Common myeloid progenitor, CD34-positive (primary cell): ENCODE measurements at regions of chr20 and their contacts with region 1.

Region 1: DNA sequence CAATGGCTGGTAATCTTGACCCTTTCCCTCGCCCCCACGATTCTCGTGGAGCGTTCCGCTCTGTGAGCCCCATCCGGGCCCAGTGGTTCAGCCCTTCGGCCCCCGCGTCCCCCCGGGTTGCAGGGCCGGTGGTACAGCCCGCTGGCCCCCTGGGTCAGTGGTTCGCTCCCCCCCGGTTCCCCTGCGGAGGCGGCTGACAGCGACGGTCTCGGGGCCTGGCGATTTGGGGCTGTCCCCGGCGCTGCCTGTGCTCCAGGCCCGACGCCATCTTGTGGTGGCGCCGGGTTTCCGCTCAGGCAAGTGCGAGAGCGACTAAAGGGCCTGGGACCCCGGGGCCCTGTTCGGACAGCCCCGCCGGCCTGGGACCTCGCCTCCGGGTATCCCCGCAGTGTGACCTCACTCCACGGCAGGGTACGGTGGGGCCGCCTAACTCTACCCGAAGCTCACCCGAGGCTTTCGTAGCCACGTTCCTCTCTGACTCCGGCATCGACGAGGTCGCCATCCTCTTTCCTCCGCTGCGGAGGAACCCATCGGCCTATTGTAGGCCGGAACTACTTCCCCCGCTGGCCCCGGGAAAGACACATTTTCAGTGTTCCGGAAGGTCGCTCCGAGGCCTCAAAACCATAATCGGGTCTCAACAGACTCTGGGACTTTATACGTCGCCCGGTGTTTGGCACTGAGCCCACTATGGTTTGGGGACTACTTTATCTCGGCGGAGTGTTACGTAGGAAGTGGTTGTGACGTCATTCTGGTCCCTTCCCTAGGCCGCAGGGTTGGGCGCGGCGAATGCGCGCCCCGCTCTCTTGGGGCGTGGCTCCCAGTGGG is at the start of gene ZNF335:
- DNase-seq: peak; percentile 97 to 98 (median 98)
- H3K4me3 ChIP-seq: peak within 1 kb of the TSS; percentile 60 to 97 (median 85)
- H3K27ac ChIP-seq: peak within 1 kb of the TSS; percentile 100
- H3K4me1 ChIP-seq: peaks cover 3 to 35% (median 26%) of the 10 kb centered on the region in 4 experiments
- H3K27me3 ChIP-seq: peaks cover 0 to 3% (median 0%) of the 10 kb centered on the region in 5 experiments

Region 2: GRCh38 chr20:45798935-45799642 is 172.8 kb before region 1 on chr20:
- CTCF ChIA-PET with region 1: interaction called, 30 read pairs
- POLR2A ChIA-PET with region 1: no interaction called
- DNase-seq: peak; percentile 63 to 77 (median 72)
- H3K4me3 ChIP-seq: no peak overlapping the region
- H3K27ac ChIP-seq: no peak overlapping the region
- H3K4me1 ChIP-seq: peaks cover 0 to 7% (median 0%) of the 10 kb centered on the region in 4 experiments
- H3K27me3 ChIP-seq: no peaks in the 10 kb centered on the region

Region 3: GRCh38 chr20:45934586-45935415 is 37.1 kb before region 1 on chr20 and contains the start of gene PCIF1:
- CTCF ChIA-PET with region 1: interaction called, 17 read pairs
- POLR2A ChIA-PET with region 1: interaction called, 8 read pairs
- DNase-seq: peak; percentile 97 to 99 (median 98)
- H3K4me3 ChIP-seq: peak within 1 kb of the TSS; percentile 73 to 99 (median 96)
- H3K27ac ChIP-seq: peak within 1 kb of the TSS; percentile 96 to 98
- H3K4me1 ChIP-seq: peaks cover 6 to 39% (median 25%) of the 10 kb centered on the region in 4 experiments
- H3K27me3 ChIP-seq: no peaks in the 10 kb centered on the region

Region 4: DNA sequence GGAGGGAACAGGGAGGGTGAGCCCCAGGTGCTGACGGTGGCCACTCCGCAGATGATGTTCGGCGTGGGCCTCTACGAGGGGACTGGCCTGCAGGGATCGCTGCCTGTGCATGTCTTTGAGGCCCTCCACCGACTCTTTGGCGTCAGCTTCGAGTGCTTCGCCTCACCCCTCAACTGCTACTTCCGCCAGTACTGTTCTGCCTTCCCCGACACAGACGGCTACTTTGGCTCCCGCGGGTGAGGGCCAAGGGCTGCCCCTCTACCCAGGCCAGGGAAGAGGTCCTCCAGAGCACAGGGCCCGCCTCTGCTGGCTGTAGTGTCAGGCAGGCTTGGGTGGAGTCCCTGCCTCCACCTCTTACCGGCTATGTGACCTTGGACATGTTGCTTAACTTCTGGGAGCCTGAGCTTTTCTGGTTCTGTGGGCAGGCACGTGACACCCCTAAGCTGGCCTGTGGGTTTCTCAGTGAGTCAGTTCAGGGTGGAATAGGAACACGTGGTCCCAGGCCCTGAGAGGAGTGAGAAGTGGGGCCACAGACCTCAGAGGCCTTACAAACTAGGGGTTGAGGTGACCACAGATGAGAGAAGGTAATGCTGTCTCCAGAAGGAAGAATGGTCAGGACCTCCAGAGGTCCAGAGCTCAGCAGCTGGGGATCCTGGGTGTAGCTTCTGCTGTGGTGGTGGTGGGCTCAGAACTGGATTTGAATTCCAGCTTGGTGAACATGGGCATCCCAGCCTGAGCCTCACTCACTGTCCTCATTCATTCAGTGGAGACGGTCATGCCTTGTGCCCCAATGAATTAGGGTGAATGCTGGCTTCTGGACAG is 25.5 kb before region 1 on chr20:
- CTCF ChIA-PET with region 1: interaction called, 19 read pairs
- POLR2A ChIA-PET with region 1: no interaction called
- DNase-seq: peak in 2 of 3 donors; percentile 40 to 46
- H3K4me3 ChIP-seq: no peak overlapping the region
- H3K27ac ChIP-seq: peak overlapping the region in 1 of 2 experiments; percentile 7
- H3K4me1 ChIP-seq: no peaks in the 10 kb centered on the region
- H3K27me3 ChIP-seq: no peaks in the 10 kb centered on the region

Region 5: DNA sequence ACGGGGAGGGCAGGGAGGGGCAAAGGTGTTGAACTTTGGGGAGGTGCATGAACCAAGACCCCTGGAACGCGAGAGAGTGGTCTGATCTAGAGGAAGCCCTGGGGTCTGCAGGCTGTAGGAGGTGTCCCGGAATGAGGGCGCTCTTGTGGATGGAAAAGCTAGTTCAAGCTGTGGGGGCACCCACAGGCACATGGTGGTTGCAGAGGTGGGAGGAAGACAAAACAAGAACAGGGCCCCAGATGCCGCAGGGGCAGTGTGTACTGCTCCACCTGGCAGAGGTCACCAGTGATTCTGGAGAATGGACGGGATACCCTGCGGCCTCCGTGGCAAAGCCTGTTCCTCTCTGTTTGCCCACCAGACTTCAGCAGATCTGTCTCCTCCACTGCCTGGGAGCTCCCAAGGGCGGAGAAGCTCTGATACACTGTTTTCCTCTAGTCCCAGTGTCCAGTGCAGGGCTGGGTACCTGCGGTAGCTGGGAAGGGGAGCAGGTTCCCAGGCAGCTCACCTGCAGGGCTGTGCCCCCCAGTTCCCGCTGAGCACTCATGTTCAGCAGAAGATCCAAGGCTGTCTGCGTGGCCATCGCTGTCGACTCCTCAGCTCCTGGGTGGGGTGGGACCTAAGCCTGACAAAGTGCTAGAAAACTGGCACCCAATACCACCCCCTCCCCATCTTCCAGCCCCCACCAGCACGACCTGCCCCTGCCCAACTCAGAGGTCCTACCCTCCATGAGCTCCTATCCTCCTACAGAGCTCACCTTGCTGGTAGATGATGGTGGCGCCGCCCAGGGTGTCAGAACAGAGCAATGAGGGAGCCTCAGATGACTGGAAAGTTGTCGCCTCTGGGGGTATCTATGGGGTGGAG is 14.6 kb before region 1 on chr20:
- CTCF ChIA-PET with region 1: interaction called, 43 read pairs
- POLR2A ChIA-PET with region 1: interaction called, 3 read pairs
- DNase-seq: no peak
- H3K4me3 ChIP-seq: no peak overlapping the region
- H3K27ac ChIP-seq: no peak overlapping the region
- H3K4me1 ChIP-seq: no peaks in the 10 kb centered on the region
- H3K27me3 ChIP-seq: no peaks in the 10 kb centered on the region

Region 6: DNA sequence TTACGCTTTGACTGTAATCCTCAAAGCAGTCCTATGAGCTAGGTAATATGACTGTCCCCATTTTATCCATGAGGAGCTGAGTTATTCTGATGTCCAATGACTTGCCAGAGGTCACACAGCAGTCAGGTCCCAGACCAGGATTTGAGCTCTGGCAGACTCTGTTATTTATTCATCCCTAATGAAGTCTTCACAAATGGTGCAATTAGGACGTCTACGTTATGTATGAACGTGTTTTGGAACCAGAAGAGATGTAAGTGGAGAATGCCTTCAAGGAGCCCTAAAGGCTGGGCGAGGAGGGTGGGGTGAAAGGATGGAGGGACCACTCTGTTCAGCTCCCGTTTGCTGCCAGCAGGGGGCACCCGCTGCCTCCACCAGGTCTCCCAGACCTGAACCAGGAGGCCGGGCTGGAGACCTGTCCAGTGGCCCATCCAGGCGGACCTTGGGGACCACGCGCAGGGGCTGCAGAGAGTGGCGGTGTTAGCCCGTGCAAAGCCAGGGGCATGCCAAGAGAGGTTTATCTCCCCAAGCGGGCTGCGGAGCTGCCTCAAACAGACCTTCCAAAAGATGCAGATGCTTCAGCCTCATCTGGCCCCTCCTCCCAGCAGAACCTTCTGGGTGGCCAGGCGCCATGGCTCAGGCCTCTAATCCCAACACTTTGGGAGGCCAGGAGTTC is 15.4 kb after region 1 on chr20:
- CTCF ChIA-PET with region 1: interaction called, 38 read pairs
- POLR2A ChIA-PET with region 1: no interaction called
- DNase-seq: peak; percentile 71 to 80 (median 77)
- H3K4me3 ChIP-seq: no peak overlapping the region
- H3K27ac ChIP-seq: no peak overlapping the region
- H3K4me1 ChIP-seq: peaks cover 0 to 4% (median 0%) of the 10 kb centered on the region in 4 experiments
- H3K27me3 ChIP-seq: peaks cover 0 to 13% (median 6%) of the 10 kb centered on the region in 5 experiments

Region 7: GRCh38 chr20:46013826-46014516 is 42.1 kb after region 1 on chr20:
- CTCF ChIA-PET with region 1: interaction called, 656 read pairs
- POLR2A ChIA-PET with region 1: no interaction called
- DNase-seq: peak; percentile 76 to 85 (median 80)
- H3K4me3 ChIP-seq: peak overlapping the region in 2 of 7 experiments; percentile 19 to 50
- H3K27ac ChIP-seq: no peak overlapping the region
- H3K4me1 ChIP-seq: peaks cover 0 to 31% (median 15%) of the 10 kb centered on the region in 4 experiments
- H3K27me3 ChIP-seq: peaks cover 0 to 62% (median 31%) of the 10 kb centered on the region in 5 experiments

Region 8: GRCh38 chr20:46215913-46216707 is 244.2 kb after region 1 on chr20:
- CTCF ChIA-PET with region 1: no interaction called
- POLR2A ChIA-PET with region 1: no interaction called
- DNase-seq: peak; percentile 60 to 85 (median 74)
- H3K4me3 ChIP-seq: no peak overlapping the region
- H3K27ac ChIP-seq: no peak overlapping the region
- H3K4me1 ChIP-seq: no peaks in the 10 kb centered on the region
- H3K27me3 ChIP-seq: peaks cover 0 to 25% (median 6%) of the 10 kb centered on the region in 5 experiments